CD14-positive monocyte (primary cell): ENCODE measurements at regions of chrX and their contacts with region 1.

Region 1: DNA sequence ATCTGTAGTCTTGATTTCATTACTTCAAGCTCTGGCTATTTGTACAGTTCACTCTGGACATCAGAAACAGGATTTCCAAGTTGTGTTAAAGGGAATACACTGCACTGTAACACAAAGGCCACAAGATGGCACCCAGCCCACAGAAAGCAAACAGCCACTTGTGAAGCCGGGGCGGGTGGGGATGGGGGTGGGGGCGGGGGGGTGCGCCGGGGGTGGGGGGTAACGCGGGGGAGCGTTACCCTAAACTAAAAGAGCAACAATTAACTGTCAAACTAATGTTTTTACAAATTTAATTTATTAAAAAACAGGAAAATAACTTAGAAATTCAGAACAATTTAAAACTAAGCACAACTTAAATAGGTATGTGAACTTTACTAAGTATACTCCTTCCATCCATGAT is 27.3 kb downstream of the PRDX4 start:
- DNase-seq: peak; percentile 28 to 48 (median 35)
- H3K4me3 ChIP-seq: no peak overlapping the region
- H3K4me3 Mint-ChIP-seq: no peak overlapping the region
- H3K27ac ChIP-seq: no peak overlapping the region
- H3K27ac Mint-ChIP-seq: no peak overlapping the region
- H3K4me1 ChIP-seq: peaks cover 2 to 3% of the 10 kb centered on the region in 2 donors
- H3K4me1 Mint-ChIP-seq: peaks cover 4% of the 10 kb centered on the region
- H3K27me3 ChIP-seq: no peaks in the 10 kb centered on the region
- H3K27me3 Mint-ChIP-seq: peaks cover 0 to 12% (median 0%) of the 10 kb centered on the region in 3 donors
- CTCF ChIP-seq: peak; percentile 54

Region 2: DNA sequence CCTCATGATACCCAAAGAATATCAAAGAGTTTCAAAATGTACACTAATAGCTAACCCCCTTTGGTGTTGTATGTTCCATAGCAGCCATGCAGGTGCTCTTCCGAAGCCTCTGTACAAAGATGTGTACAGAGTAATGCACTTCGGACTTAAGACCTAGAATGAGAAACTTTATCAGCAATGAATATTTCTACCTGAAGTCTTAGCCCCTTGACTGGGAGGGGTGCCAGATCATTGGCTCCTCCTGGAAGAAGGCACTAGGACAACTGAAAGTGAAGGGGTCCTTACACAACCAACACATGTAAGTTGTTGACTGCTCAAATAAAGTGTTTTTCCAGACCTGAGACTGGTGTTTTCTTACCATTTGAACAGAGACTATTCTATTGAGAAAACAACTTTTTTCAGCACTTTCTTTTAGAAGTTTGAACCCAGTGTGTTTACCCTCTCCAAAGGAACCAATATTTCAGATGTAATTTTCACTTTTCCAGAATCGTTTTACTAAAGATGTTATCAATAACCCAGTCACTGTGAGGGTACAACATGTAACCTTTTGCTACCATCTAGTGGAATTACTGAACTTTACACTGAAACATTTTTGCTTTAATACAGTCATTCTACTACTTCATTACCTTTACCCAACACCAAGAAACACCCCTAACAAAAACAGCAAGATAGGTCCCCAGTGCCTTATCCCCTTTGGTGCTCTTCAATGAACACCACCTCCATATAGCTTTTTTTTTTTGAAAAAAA is 60.6 kb before region 1 on chrX:
- intact Hi-C with region 1: no loop called
- DNase-seq: no peak
- H3K4me3 ChIP-seq: no peak overlapping the region
- H3K4me3 Mint-ChIP-seq: no peak overlapping the region
- H3K27ac ChIP-seq: no peak overlapping the region
- H3K27ac Mint-ChIP-seq: no peak overlapping the region
- H3K4me1 ChIP-seq: no peaks in the 10 kb centered on the region
- H3K4me1 Mint-ChIP-seq: no peaks in the 10 kb centered on the region
- H3K27me3 ChIP-seq: no peaks in the 10 kb centered on the region
- H3K27me3 Mint-ChIP-seq: peaks cover 0 to 8% (median 3%) of the 10 kb centered on the region in 3 donors
- CTCF ChIP-seq: no peak

Region 3: DNA sequence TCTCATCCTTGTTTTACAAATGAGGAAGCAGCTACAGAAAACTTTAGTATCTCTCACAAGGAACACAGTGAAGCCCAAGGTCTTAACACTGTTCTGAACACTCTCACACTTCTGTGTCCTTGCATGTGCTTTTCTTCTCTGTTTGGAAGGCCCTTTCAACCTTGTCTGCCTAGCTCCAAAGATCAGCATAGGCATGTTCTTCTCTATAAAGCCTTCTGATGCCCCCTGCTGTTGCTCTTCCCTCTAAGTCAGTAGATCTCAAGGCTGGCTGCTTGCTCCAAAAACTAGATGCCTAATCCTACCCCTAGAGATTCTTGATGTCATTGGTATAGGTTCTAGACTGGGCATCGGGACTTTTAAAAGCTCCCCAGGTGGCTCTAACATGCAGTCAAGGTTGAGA is 207.2 kb after region 1 on chrX:
- intact Hi-C with region 1: loop called (anchors 2 to 10 kb)
- DNase-seq: peak; percentile 54 to 75 (median 72)
- H3K4me3 ChIP-seq: peak overlapping the region in 1 of 3 experiments; percentile 27
- H3K4me3 Mint-ChIP-seq: no peak overlapping the region
- H3K27ac ChIP-seq: peak overlapping the region; percentile 40 to 67
- H3K27ac Mint-ChIP-seq: no peak overlapping the region
- H3K4me1 ChIP-seq: peaks cover 26 to 31% of the 10 kb centered on the region in 2 donors
- H3K4me1 Mint-ChIP-seq: peaks cover 6% of the 10 kb centered on the region
- H3K27me3 ChIP-seq: peaks cover 0 to 2% of the 10 kb centered on the region in 2 donors
- H3K27me3 Mint-ChIP-seq: peaks cover 0 to 18% (median 1%) of the 10 kb centered on the region in 3 donors
- CTCF ChIP-seq: peak; percentile 38

Region 4: DNA sequence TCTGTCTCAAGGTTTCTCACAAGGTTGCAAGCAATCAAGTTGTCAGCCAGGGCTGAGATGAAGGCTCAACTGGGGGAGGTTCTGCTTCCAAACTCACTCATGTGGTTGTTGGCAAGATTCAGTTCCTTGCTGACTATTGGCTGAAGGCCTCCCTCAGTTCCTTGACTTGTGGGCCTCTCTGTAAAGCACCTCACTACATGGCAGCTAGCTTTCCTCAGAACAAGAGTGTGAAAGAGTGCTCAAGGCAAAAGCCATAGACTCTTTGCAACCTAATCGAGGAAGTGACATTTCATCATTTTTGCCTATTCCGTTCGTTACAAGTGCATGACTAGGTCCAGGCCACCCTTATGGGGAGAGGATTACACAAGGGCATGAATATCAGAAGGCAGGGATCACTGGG is 265.2 kb after region 1 on chrX:
- intact Hi-C with region 1: no loop called
- DNase-seq: peak; percentile 70 to 82 (median 79)
- H3K4me3 ChIP-seq: no peak overlapping the region
- H3K4me3 Mint-ChIP-seq: no peak overlapping the region
- H3K27ac ChIP-seq: peak overlapping the region; percentile 9 to 72
- H3K27ac Mint-ChIP-seq: peak overlapping the region; percentile 73 to 88 (median 85)
- H3K4me1 ChIP-seq: peaks cover 17 to 26% of the 10 kb centered on the region in 2 donors
- H3K4me1 Mint-ChIP-seq: peaks cover 18% of the 10 kb centered on the region
- H3K27me3 ChIP-seq: peaks cover 0 to 2% of the 10 kb centered on the region in 2 donors
- H3K27me3 Mint-ChIP-seq: peaks cover 0 to 25% (median 0%) of the 10 kb centered on the region in 3 donors
- CTCF ChIP-seq: no peak